H1 (cell line): ENCODE measurements at regions of chr15 and their contacts with region 1.

Region 1: DNA sequence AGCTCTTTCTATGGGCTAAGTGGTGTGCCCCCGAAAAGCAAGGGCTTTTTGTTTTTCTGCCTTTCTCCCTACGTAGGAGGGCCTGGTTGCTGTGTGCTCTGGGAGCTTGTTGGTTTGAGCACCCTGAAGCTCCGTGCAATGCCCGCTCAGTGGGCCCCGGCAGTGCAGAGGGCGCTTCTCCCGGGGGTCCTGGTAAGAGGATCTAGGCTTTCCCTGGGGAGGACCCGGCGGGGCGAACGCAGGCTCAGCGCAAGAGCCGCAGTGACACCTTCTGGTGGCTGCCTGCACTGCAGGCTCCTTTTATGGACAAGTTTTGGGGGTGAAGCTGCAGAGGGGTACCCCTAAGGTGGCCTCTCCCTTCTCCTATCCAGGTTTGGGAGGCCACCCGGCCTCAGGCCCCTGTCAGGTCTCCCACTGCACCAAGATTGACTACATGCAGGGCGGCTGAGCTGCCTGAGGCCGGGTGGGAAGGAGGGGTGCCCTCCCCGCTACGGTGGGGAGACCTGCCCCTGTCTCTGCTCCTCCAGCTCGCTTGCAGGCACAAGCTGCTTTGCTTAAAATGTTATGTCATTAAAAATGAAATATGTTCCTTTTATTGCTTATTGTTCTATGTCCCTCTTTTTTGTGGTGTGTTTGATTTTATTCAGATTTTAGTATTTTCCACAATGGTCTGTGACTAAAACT is 387.9 kb downstream of the GABRG3 start:
- DNase-seq: peak; percentile 49 to 90
- H3K4me3 ChIP-seq: peak overlapping the region in 1 of 4 experiments; percentile 42; a peak in 1 of 8 replicates
- H3K27ac ChIP-seq: no peak overlapping the region
- H3K4me1 ChIP-seq: no peaks in the 10 kb centered on the region
- H3K27me3 ChIP-seq: no peaks in the 10 kb centered on the region
- CTCF ChIP-seq: peak; percentile 87 to 90 (median 89)
- EP300 ChIP-seq: no peak
- POLR2A ChIP-seq: no peak
- RAD21 ChIP-seq: peak; percentile 93 to 94

Region 2: GRCh38 chr15:26891448-26892181 is 467.3 kb before region 1 on chr15:
- CTCF ChIA-PET with region 1: interaction called, 27 read pairs
- POLR2A ChIA-PET with region 1: no interaction called
- DNase-seq: peak; percentile 62 to 93
- H3K4me3 ChIP-seq: no peak overlapping the region
- H3K27ac ChIP-seq: no peak overlapping the region
- H3K4me1 ChIP-seq: peaks cover 0 to 5% (median 4%) of the 10 kb centered on the region in 4 experiments; a peak in 4 of 7 replicates
- H3K27me3 ChIP-seq: no peaks in the 10 kb centered on the region; a peak in 1 of 7 replicates
- CTCF ChIP-seq: peak; percentile 94 to 95 (median 94)
- EP300 ChIP-seq: no peak
- POLR2A ChIP-seq: no peak
- RAD21 ChIP-seq: peak; percentile 97

Region 3: GRCh38 chr15:27238209-27238608 is 120.7 kb before region 1 on chr15:
- CTCF ChIA-PET with region 1: interaction called, 14 read pairs
- POLR2A ChIA-PET with region 1: no interaction called
- DNase-seq: peak in 1 of 2 experiments; percentile 83
- H3K4me3 ChIP-seq: no peak overlapping the region
- H3K27ac ChIP-seq: no peak overlapping the region
- H3K4me1 ChIP-seq: no peaks in the 10 kb centered on the region
- H3K27me3 ChIP-seq: no peaks in the 10 kb centered on the region
- CTCF ChIP-seq: peak; percentile 62 to 75 (median 64)
- EP300 ChIP-seq: no peak
- POLR2A ChIP-seq: no peak
- RAD21 ChIP-seq: peak; percentile 62 to 77

Region 4: DNA sequence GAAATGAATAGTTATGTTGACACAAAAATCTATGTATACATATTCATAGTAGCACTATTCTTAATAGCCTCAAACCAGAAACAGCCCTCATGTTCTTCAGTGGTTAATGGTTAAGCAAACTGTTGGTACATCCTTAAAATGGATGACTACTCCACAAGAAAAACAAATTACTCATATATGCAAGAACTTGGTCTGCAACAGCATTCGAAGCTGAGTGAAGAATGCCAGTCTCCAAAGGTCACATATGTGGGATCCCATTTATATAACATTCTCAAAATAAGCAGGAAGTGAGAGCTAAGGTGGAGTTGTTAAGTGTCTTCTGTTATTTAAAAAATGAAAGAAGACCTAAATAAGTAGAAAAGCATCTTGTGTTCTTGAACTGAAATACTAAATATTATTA is 22.2 kb before region 1 on chr15:
- CTCF ChIA-PET with region 1: interaction called, 27 read pairs
- POLR2A ChIA-PET with region 1: no interaction called
- DNase-seq: no peak
- H3K4me3 ChIP-seq: no peak overlapping the region
- H3K27ac ChIP-seq: no peak overlapping the region
- H3K4me1 ChIP-seq: no peaks in the 10 kb centered on the region
- H3K27me3 ChIP-seq: no peaks in the 10 kb centered on the region
- CTCF ChIP-seq: no peak
- EP300 ChIP-seq: no peak
- POLR2A ChIP-seq: no peak
- RAD21 ChIP-seq: no peak

Region 5: GRCh38 chr15:27382361-27383025 is 23.6 kb after region 1 on chr15:
- CTCF ChIA-PET with region 1: interaction called, 12 read pairs
- POLR2A ChIA-PET with region 1: no interaction called
- DNase-seq: no peak
- H3K4me3 ChIP-seq: no peak overlapping the region
- H3K27ac ChIP-seq: no peak overlapping the region
- H3K4me1 ChIP-seq: no peaks in the 10 kb centered on the region
- H3K27me3 ChIP-seq: no peaks in the 10 kb centered on the region
- CTCF ChIP-seq: no peak
- EP300 ChIP-seq: no peak
- POLR2A ChIP-seq: no peak
- RAD21 ChIP-seq: no peak